Psoas muscle (tissue), 8 donors: ENCODE measurements at regions of chr10 and their contacts with region 1.

Region 1: DNA sequence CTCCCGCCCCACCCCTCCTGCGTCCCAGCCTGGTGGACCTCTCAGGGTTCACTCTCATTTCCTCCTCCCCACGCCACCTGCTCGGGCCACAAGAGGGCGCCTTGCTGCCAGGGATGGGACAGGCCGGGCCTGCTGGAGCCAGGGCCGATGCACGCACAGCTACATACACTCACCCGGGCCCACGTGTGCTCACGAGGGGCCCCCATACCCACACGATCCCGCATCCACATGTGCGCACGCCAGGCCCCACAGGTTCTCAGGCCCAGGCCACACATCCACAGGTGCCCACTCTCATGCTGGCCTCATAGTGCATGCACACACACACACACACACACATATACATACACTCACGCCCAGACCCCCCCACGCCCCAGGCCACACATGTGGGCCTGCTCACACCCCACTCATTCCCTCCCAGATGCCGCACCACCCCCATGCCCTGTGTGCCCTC is 68.6 kb downstream of the LHPP start:
- DNase-seq: peak; percentile 88 to 93
- ATAC-seq: peak; percentile 85 to 90 (median 88)
- H3K4me3 ChIP-seq: no peak overlapping the region
- H3K27ac ChIP-seq: no peak overlapping the region
- H3K4me1 ChIP-seq: peaks cover 3% of the 10 kb centered on the region
- H3K27me3 ChIP-seq: no peaks in the 10 kb centered on the region
- CTCF ChIP-seq: peak; percentile 85

Region 2: GRCh38 chr10:124125447-124126116 is 404.7 kb before region 1 on chr10:
- intact Hi-C with region 1: no loop called
- DNase-seq: no peak
- ATAC-seq: no peak
- H3K4me3 ChIP-seq: no peak overlapping the region
- H3K27ac ChIP-seq: no peak overlapping the region
- H3K4me1 ChIP-seq: peaks cover 5% of the 10 kb centered on the region
- H3K27me3 ChIP-seq: no peaks in the 10 kb centered on the region
- CTCF ChIP-seq: peak; percentile 24

Region 3: DNA sequence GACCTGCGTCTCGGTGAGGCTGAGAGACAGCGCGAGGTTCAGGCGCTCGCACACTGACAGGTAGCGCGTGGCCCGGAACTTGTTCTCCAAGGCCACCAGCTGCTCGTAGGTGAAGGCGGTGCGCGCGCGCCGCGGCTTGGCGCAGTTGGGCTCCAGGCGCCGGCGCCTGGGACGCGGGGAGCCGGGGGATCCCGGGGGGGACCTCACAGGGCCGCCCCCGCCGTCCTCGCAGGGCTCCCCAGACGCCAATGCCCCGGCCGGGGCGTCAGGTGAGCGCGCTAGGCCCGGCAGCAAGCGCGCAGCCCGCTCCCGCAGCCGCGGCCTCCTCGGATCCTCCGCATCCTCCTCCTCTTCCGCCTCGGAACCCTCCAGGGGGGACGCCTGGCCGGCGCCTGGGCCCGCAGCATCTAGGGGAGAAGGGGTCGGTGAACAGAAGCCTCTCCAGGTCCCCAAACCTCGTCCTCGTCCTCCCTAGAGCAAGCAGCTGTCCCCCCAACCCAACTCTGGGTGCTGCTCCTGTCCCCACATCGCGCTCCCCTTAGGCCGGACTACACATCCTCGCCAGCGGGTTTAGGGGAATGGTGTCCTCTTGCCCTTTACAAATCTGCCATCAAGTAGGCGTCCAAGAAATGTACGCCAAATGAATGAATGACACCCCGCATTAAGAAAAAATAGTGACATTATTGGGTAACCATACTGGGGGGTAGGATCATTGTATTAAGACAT is 82.3 kb before region 1 on chr10:
- intact Hi-C with region 1: no loop called
- DNase-seq: no peak
- ATAC-seq: no peak
- H3K4me3 ChIP-seq: peak overlapping the region; percentile 56
- H3K27ac ChIP-seq: no peak overlapping the region
- H3K4me1 ChIP-seq: peaks cover 12% of the 10 kb centered on the region
- H3K27me3 ChIP-seq: peaks cover 8 to 92% (median 26%) of the 10 kb centered on the region in 3 donors
- CTCF ChIP-seq: no peak

Region 4: DNA sequence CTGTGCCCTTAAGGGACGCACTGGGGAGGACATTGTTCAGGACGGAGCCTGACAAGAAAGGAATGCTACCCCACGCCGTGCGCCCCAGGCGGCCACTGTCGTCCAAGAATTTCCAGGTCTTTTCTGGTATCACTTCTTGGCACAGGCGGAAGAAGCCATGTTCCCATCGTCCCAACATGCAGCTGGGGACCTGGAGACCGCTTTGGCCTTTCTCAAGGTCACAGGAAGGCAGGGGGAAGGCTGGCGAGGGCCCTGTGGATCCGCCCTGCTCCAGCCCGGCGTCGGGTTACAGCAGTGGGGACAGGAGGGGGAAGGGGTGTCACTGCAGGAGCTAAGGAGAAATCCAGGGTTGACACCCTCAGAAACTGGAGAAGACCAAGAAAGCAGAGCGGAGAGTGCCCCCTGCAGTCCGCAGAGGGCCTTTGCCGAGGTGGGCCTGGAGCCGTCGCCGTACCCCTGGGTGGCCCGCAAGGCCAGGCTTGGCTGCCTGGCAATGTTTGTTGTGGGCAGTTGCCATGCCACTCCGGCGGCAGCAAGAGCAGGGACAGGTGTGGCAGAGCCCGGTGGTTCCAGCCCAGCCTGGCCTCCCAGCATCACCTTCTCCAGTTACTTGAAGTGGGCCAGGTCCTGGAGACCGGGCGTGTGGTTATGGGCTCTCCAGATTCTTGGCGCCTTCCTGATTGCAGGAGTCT is 35.5 kb after region 1 on chr10:
- intact Hi-C with region 1: loop called in 1 of 2 experiments (anchors 5 kb)
- DNase-seq: peak; percentile 76 to 93
- ATAC-seq: peak; percentile 89 to 96 (median 90)
- H3K4me3 ChIP-seq: no peak overlapping the region
- H3K27ac ChIP-seq: peak overlapping the region; percentile 73
- H3K4me1 ChIP-seq: peaks cover 35% of the 10 kb centered on the region
- H3K27me3 ChIP-seq: no peaks in the 10 kb centered on the region
- CTCF ChIP-seq: peak; percentile 64

Region 5: GRCh38 chr10:124626759-124627380 is 96.6 kb after region 1 on chr10:
- intact Hi-C with region 1: loop called in 1 of 2 experiments (anchors 5 kb)
- DNase-seq: no peak
- ATAC-seq: peak in 1 of 4 donors; percentile 26
- H3K4me3 ChIP-seq: no peak overlapping the region
- H3K27ac ChIP-seq: peak overlapping the region; percentile 54
- H3K4me1 ChIP-seq: peaks cover 84% of the 10 kb centered on the region
- H3K27me3 ChIP-seq: no peaks in the 10 kb centered on the region
- CTCF ChIP-seq: no peak

Region 6: DNA sequence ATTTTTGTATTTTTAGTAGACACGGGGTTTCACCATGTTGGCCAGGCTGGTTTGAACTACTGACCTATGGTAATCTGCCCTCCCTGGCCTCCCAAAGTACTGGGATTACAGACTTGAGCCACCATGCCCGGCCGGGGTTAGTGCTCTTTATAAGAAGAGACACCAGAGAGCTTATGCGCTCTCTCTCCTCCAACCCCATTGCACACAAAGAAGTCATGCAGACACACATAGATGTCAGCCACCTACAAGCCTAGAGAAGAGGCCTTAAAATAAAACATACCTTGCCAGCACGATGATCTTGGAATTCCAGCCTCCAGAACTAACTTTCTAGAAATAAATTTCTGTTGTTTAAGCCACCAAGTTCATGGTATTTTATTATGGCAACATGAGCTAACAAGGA is 224.0 kb after region 1 on chr10:
- intact Hi-C with region 1: loop called in 1 of 2 experiments (anchors 5 kb)
- DNase-seq: no peak
- ATAC-seq: no peak
- H3K4me3 ChIP-seq: no peak overlapping the region
- H3K27ac ChIP-seq: no peak overlapping the region
- H3K4me1 ChIP-seq: peaks cover 8% of the 10 kb centered on the region
- H3K27me3 ChIP-seq: no peaks in the 10 kb centered on the region
- CTCF ChIP-seq: no peak

Region 7: GRCh38 chr10:124827474-124827873 is 297.2 kb after region 1 on chr10:
- intact Hi-C with region 1: loop called in 1 of 2 experiments (anchors 2 kb)
- DNase-seq: no peak
- ATAC-seq: peak in 1 of 4 donors; percentile 45
- H3K4me3 ChIP-seq: no peak overlapping the region
- H3K27ac ChIP-seq: no peak overlapping the region
- H3K4me1 ChIP-seq: peaks cover 12% of the 10 kb centered on the region
- H3K27me3 ChIP-seq: no peaks in the 10 kb centered on the region
- CTCF ChIP-seq: peak; percentile 62

Region 8: GRCh38 chr10:124928087-124928486 is 397.8 kb after region 1 on chr10:
- intact Hi-C with region 1: no loop called
- DNase-seq: no peak
- ATAC-seq: peak in 2 of 4 donors; percentile 17 to 29
- H3K4me3 ChIP-seq: no peak overlapping the region
- H3K27ac ChIP-seq: no peak overlapping the region
- H3K4me1 ChIP-seq: peaks cover 48% of the 10 kb centered on the region
- H3K27me3 ChIP-seq: no peaks in the 10 kb centered on the region
- CTCF ChIP-seq: no peak